B cell (primary cell): ENCODE measurements at regions of chr13 and their contacts with region 1.

Region 1: DNA sequence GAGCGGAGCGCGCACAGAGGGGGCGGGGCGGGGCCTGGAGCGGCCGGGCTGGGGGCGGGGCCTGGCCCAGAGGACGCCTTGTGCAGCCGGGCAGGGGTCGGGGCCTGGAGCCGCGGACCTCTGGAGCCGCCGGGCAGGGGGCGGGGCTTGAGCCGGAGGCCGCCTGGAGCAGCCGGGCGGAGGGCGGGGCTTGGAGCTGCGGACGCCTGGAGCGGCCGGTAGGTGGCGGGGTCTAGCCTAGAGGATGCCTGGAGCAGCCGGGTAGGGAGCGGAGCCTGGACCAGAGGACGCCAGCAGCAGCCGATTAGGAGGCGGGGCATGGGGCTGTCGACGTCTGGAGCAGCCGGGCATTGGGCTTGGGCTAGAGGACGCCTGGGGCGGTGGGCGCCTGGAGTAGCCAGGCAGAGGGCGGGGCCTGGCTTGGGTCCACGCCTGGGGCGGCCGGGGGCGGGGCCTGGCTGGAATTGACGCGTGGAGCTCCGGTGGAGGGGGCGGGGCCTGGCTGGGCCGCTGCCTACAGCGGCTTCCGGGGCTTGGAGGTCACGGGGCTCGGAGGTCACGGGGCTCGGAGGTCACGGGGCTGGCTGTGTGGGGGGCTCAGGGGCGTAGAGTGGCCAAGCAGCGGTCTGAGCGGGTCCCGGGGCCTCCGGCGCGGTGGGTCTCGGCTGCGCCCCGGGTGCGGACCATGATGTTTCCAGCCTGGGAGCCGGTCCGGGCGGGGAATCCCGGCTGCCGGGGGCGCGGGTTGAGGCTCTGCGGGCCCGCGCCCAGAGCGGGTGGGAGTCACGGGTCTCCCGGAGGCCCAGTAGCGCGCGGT is at the start of gene ANKRD10:
- DNase-seq: peak; percentile 98
- ATAC-seq: peak; percentile 81
- H3K4me3 ChIP-seq: peak within 1 kb of the TSS; percentile 74 to 96 (median 95)
- H3K4me3 Mint-ChIP-seq: peak within 1 kb of the TSS; percentile 84
- H3K27ac ChIP-seq: peak within 1 kb of the TSS; percentile 88 to 97
- H3K27ac Mint-ChIP-seq: peak within 1 kb of the TSS; percentile 98
- H3K4me1 ChIP-seq: peaks cover 28 to 38% of the 10 kb centered on the region in 2 donors
- H3K4me1 Mint-ChIP-seq: peaks cover 44% of the 10 kb centered on the region
- H3K27me3 ChIP-seq: no peaks in the 10 kb centered on the region
- H3K27me3 Mint-ChIP-seq: no peaks in the 10 kb centered on the region
- CTCF ChIP-seq: peak; percentile 77
- total RNA-seq, gene ANKRD10: 256 and 288 TPM in 2 replicates

Region 2: DNA sequence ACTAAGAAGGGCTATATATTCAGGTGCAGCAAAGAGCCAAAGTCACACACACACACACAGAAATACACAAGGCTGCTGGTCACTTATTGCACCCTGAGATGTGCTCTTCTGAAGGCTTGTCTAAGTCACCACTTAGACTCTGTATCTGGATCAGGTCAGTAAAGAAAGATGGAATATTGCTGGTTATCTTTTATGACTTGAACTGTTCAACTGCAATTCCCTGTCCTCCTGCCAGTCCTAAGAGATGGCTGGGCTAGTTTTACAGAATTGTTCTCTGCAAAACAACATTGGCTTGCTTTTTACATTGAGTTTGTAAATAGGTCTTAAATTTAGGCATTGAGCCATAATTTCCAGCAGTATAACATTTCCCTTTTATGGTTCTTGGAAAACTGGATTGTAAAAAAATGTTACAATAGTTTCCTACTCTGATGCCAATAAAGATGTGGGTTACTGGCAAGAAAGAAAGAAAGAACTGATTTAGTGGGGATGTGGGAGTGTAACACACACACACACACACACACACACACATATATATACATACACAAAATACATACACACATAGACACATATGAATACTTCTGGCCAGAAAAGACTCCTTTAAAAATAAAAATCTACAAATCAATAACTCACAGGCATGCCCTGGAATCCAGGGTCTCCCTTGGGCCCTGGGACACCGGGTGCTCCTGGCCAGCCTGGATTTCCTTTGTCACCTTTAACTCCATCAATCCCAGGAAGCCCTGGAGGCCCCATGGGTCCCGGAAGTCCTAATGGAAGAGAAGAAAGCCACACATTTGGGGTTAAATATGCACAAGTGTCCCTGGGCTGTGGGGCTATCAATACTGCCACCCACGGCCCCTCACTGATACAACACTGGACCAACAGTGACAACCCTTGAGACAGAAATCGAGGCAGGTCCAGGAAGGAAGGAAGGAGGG is 746.0 kb before region 1 on chr13:
- CTCF ChIA-PET with region 1: no interaction called
- POLR2A ChIA-PET with region 1: no interaction called
- intact Hi-C with region 1: no loop called
- DNase-seq: no peak
- ATAC-seq: no peak
- H3K4me3 ChIP-seq: no peak overlapping the region
- H3K4me3 Mint-ChIP-seq: no peak overlapping the region
- H3K27ac ChIP-seq: no peak overlapping the region
- H3K27ac Mint-ChIP-seq: no peak overlapping the region
- H3K4me1 ChIP-seq: no peaks in the 10 kb centered on the region
- H3K4me1 Mint-ChIP-seq: no peaks in the 10 kb centered on the region
- H3K27me3 ChIP-seq: peaks cover 0 to 2% (median 0%) of the 10 kb centered on the region in 4 experiments
- H3K27me3 Mint-ChIP-seq: peaks cover 13% of the 10 kb centered on the region
- CTCF ChIP-seq: no peak

Region 3: GRCh38 chr13:110455941-110456340 is 459.3 kb before region 1 on chr13:
- CTCF ChIA-PET with region 1: interaction called, 4 read pairs
- POLR2A ChIA-PET with region 1: no interaction called
- intact Hi-C with region 1: loop called (anchors 2 kb)
- DNase-seq: peak; percentile 82
- ATAC-seq: peak; percentile 93
- H3K4me3 ChIP-seq: peak overlapping the region in 3 of 5 experiments; percentile 20 to 37 (median 29)
- H3K4me3 Mint-ChIP-seq: peak overlapping the region; percentile 60
- H3K27ac ChIP-seq: no peak overlapping the region
- H3K27ac Mint-ChIP-seq: peak overlapping the region; percentile 8
- H3K4me1 ChIP-seq: peaks cover 9 to 10% of the 10 kb centered on the region in 2 donors
- H3K4me1 Mint-ChIP-seq: peaks cover 19% of the 10 kb centered on the region
- H3K27me3 ChIP-seq: no peaks in the 10 kb centered on the region
- H3K27me3 Mint-ChIP-seq: peaks cover 4% of the 10 kb centered on the region
- CTCF ChIP-seq: peak; percentile 84

Region 4: DNA sequence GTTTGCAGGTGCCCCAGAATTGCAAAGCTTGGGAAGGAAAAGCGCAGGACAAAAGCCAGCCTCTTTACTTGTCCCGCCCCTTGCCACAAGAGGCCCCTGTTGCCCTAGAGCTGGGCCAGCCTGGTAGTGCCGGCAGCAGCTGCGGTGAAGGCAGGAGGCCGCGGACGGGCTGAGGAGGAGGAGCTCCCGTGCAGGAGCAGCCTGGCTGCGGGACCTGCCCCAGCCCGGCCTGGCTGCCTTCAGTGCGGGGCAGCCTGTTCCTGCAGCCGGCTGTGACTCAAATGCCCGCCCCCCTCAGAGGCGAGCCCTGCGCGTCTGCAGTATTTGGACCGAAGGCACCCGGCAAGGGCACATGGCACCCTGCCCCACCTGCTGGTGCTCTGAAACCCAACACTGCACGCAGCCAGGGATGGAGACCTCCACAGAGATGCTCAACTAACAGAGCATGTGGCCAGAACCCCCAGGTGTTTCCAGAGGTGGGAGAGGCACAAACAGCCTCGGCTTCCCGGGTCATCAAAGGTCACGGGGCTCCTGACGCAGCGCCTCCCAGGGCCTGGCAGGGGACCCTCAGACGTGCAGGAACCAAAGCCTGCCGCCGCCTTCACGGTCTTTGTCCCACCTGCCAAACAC is 270.3 kb before region 1 on chr13:
- CTCF ChIA-PET with region 1: interaction called, 3 read pairs
- POLR2A ChIA-PET with region 1: no interaction called
- intact Hi-C with region 1: loop called (anchors 10 kb)
- DNase-seq: peak; percentile 85
- ATAC-seq: peak; percentile 95
- H3K4me3 ChIP-seq: peak overlapping the region in 2 of 5 experiments; percentile 23 to 39
- H3K4me3 Mint-ChIP-seq: peak overlapping the region; percentile 57
- H3K27ac ChIP-seq: no peak overlapping the region
- H3K27ac Mint-ChIP-seq: peak overlapping the region; percentile 71
- H3K4me1 ChIP-seq: peaks cover 19 to 23% of the 10 kb centered on the region in 2 donors
- H3K4me1 Mint-ChIP-seq: peaks cover 24% of the 10 kb centered on the region
- H3K27me3 ChIP-seq: no peaks in the 10 kb centered on the region
- H3K27me3 Mint-ChIP-seq: no peaks in the 10 kb centered on the region
- CTCF ChIP-seq: peak; percentile 71

Region 5: DNA sequence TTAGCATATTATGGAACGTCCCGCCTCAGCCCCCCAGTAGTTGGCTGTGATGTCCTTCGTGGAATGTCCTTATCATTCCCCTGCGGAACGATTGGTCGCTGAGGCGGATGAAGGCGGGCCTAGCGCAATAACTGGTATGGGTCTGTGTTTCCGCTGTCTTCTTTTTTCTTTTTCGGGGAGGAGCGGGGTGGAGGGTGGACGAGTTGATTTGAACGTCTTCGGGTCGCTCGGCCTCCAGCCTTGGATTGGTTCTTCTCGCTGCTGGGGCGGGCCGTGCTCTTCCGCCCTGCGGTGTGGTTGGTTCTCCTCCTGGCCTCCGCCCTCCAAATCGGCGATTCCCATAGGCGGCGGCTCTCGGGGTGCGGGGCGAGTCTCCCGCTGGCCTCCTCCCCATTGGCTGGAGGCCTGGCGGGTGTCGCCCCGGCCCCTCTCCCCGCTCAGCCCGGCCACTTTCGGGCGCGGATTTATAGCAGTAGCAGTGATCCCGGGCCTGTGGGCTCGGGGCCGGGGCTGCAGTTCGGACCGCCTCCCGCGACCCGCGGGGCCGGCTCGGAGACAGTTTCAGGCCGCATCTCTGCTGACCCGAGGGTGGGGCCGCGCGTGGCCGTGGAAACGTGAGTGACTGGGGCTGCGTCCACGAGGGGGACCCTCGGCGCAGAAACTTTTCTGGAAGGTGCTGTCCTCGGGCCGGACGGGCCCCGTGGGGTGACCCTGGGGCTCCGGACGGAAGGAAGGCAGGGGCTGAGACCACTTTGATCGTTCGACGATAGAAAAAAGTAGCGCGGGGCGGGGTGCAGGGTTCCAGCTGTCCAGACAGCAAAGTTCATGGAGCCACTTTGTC is 199.7 kb before region 1 on chr13:
- CTCF ChIA-PET with region 1: interaction called, 6 read pairs
- POLR2A ChIA-PET with region 1: interaction called, 14 read pairs
- intact Hi-C with region 1: loop called (anchors 1 kb)
- DNase-seq: peak; percentile 99
- ATAC-seq: peak; percentile 56
- H3K4me3 ChIP-seq: peak overlapping the region; percentile 89 to 100 (median 100)
- H3K4me3 Mint-ChIP-seq: peak overlapping the region; percentile 96
- H3K27ac ChIP-seq: peak overlapping the region; percentile 82 to 86
- H3K27ac Mint-ChIP-seq: peak overlapping the region; percentile 96
- H3K4me1 ChIP-seq: peaks cover 28 to 30% of the 10 kb centered on the region in 2 donors
- H3K4me1 Mint-ChIP-seq: peaks cover 35% of the 10 kb centered on the region
- H3K27me3 ChIP-seq: no peaks in the 10 kb centered on the region
- H3K27me3 Mint-ChIP-seq: no peaks in the 10 kb centered on the region
- CTCF ChIP-seq: peak; percentile 30

Region 6: DNA sequence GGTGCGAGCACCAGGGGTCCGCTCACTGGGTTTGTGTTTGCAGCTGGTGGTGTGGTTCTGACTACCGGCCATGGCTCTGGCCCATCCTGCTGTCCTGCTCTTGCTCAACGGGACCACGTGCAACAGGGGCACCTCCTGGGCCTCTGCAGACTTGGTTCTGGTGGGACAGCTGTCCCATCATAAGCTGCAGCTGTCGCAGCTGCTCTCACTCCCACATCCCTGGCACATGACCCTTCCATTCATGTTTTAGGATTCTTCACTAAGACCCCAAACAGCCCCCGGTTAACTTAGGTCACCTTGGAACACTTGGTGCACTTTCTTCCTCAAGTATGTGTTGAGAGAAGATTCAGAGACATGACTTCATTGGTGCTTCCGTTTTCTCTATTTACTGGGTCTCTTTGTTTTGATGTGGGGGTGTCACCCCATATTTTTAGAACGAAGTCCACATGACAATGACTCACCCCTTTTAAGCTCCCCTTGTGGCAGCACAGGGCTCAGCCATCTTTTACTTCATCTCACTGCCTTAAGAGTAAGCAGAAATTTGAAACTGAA is 131.4 kb after region 1 on chr13:
- CTCF ChIA-PET with region 1: interaction called, 4 read pairs
- POLR2A ChIA-PET with region 1: no interaction called
- intact Hi-C with region 1: loop called (anchors 1 kb)
- DNase-seq: peak; percentile 43
- ATAC-seq: peak; percentile 63
- H3K4me3 ChIP-seq: no peak overlapping the region
- H3K4me3 Mint-ChIP-seq: peak overlapping the region; percentile 38
- H3K27ac ChIP-seq: no peak overlapping the region
- H3K27ac Mint-ChIP-seq: peak overlapping the region; percentile 62
- H3K4me1 ChIP-seq: peaks cover 3 to 8% of the 10 kb centered on the region in 2 donors
- H3K4me1 Mint-ChIP-seq: peaks cover 20% of the 10 kb centered on the region
- H3K27me3 ChIP-seq: no peaks in the 10 kb centered on the region
- H3K27me3 Mint-ChIP-seq: peaks cover 13% of the 10 kb centered on the region
- CTCF ChIP-seq: peak; percentile 28

Region 7: GRCh38 chr13:111153279-111153976 is 238.2 kb after region 1 on chr13:
- CTCF ChIA-PET with region 1: interaction called, 3 read pairs
- POLR2A ChIA-PET with region 1: no interaction called
- intact Hi-C with region 1: loop called (anchors 1 kb)
- DNase-seq: peak; percentile 96
- ATAC-seq: peak; percentile 82
- H3K4me3 ChIP-seq: peak overlapping the region; percentile 58 to 91 (median 69)
- H3K4me3 Mint-ChIP-seq: peak overlapping the region; percentile 96
- H3K27ac ChIP-seq: peak overlapping the region; percentile 64 to 86
- H3K27ac Mint-ChIP-seq: peak overlapping the region; percentile 97
- H3K4me1 ChIP-seq: peaks cover 18 to 22% of the 10 kb centered on the region in 2 donors
- H3K4me1 Mint-ChIP-seq: peaks cover 30% of the 10 kb centered on the region
- H3K27me3 ChIP-seq: peaks cover 0 to 3% (median 0%) of the 10 kb centered on the region in 4 experiments
- H3K27me3 Mint-ChIP-seq: peaks cover 3% of the 10 kb centered on the region
- CTCF ChIP-seq: no peak

Region 8: DNA sequence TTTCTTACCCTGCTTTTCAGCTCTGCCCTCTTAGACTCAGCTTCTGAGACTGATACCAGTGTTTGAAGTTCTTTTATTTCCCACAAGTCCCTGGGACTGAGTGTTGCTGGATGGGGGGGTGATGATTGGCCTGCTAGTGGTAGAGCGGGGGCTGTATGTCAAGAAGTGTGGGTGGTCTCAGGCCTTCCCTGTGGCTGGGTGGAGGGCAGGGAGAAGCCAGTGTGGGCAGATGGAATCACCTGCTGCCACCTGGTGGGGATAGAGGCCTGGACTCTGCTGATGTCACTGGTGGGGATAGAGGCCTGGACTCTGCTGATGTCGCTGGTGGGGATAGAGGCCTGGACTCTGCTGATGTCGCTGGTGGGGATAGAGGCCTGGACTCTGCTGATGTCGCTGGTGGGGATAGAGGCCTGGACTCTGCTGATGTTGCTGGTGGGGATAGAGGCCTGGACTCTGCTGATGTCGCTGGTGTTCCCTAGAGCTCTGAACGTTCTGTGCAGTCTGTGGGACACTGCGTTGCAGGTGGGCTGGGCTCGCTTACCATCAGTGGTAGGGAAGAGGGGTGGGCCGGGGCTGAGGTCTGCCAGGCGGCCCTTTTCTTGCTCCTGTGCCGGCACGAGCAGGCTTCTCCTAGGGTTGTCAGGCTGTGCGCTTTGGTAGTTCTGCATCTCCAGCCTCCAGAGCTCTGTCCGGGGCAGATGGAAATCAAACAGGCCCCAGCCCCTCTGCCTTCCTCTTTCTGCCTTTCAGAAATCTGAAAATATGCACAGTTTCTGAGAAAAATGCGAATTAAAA is 301.1 kb after region 1 on chr13:
- CTCF ChIA-PET with region 1: interaction called, 5 read pairs
- POLR2A ChIA-PET with region 1: no interaction called
- intact Hi-C with region 1: loop called (anchors 5 kb)
- DNase-seq: peak; percentile 61
- ATAC-seq: peak; percentile 74
- H3K4me3 ChIP-seq: no peak overlapping the region
- H3K4me3 Mint-ChIP-seq: no peak overlapping the region
- H3K27ac ChIP-seq: no peak overlapping the region
- H3K27ac Mint-ChIP-seq: peak overlapping the region; percentile 55
- H3K4me1 ChIP-seq: peaks cover 18 to 31% of the 10 kb centered on the region in 2 donors
- H3K4me1 Mint-ChIP-seq: peaks cover 47% of the 10 kb centered on the region
- H3K27me3 ChIP-seq: no peaks in the 10 kb centered on the region
- H3K27me3 Mint-ChIP-seq: no peaks in the 10 kb centered on the region
- CTCF ChIP-seq: peak; percentile 62